Activated T-helper 2 cell treated with anti-CD3 and anti-CD28 coated beads, Interferon-gamma antibody, Interleukin-2, Interleukin-4, amounts not matched to agents 10 μg/mL and 5 μg/mL and 100 μg/mL, durations not matched to agents 14 hours and 24 hours and 36 hours (primary cell): ENCODE measurements at regions of chr7 and their contacts with region 1.

Region 1: GRCh38 chr7:98168181-98168905 is 42.9 kb upstream of the BHLHA15 start:
- DNase-seq: peak; percentile 41
- H3K4me3 Mint-ChIP-seq: no peak overlapping the region
- H3K27ac Mint-ChIP-seq: no peak overlapping the region
- H3K4me1 Mint-ChIP-seq: peaks cover 1% of the 10 kb centered on the region
- H3K27me3 Mint-ChIP-seq: no peaks in the 10 kb centered on the region

Region 2: DNA sequence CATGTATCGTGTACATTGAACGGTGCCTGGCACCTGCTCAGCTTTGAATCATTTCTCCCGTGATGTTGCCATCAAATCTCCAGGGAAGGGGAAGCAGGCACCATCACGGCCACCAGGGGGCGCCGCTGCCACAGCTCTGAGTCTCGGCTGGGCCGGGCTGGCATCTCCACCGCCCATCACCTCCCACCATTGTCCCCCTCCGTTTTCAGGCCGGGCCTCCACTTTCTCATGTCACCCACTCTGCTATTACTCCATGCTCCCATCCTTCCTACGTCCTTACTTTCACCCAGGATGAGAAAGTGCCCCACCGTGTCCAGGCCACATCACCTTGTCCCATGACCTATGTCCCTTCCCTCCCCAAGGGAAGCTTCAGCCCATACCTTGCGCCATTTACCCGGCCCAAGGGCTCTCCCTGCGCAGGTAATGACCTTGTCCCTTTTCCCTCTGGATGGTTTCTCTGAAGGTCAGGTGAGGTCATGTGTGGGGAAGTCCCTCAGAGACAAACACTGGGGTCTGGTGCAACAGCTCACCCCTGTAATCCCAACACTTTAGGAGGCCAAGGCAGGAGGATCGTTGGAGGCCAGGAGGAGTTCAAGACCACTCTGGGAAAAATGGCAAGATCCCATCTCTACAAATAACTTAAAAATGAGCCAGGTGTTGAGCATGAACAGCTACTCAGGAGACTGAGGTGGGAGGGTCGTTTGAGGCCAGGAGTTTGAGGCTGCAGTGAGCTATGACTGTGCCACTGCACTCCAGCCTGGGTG is 146.6 kb before region 1 on chr7:
- intact Hi-C with region 1: loop called (anchors 1 kb)
- DNase-seq: peak; percentile 59
- H3K4me3 Mint-ChIP-seq: no peak overlapping the region
- H3K27ac Mint-ChIP-seq: no peak overlapping the region
- H3K4me1 Mint-ChIP-seq: no peaks in the 10 kb centered on the region
- H3K27me3 Mint-ChIP-seq: no peaks in the 10 kb centered on the region

Region 3: GRCh38 chr7:98133181-98133580 is 35.2 kb before region 1 on chr7:
- intact Hi-C with region 1: loop called (anchors 5 kb)
- DNase-seq: no peak
- H3K4me3 Mint-ChIP-seq: peak overlapping the region; percentile 35
- H3K27ac Mint-ChIP-seq: peak overlapping the region; percentile 26
- H3K4me1 Mint-ChIP-seq: peaks cover 30% of the 10 kb centered on the region
- H3K27me3 Mint-ChIP-seq: peaks cover 12% of the 10 kb centered on the region